CD4-positive, alpha-beta T cell (primary cell): ENCODE measurements at regions of chr7 and their contacts with region 1.

Region 1: GRCh38 chr7:17247357-17247756 is 51.1 kb upstream of the AHR start:
- DNase-seq: no peak
- ATAC-seq: no peak
- H3K4me3 ChIP-seq: no peak overlapping the region
- H3K4me3 Mint-ChIP-seq: no peak overlapping the region
- H3K27ac ChIP-seq: no peak overlapping the region
- H3K27ac Mint-ChIP-seq: no peak overlapping the region
- H3K4me1 ChIP-seq: no peaks in the 10 kb centered on the region
- H3K4me1 Mint-ChIP-seq: peaks cover 7% of the 10 kb centered on the region
- H3K27me3 ChIP-seq: no peaks in the 10 kb centered on the region
- H3K27me3 Mint-ChIP-seq: no peaks in the 10 kb centered on the region
- CTCF ChIP-seq: no peak

Region 2: GRCh38 chr7:17275749-17276671 is 28.7 kb after region 1 on chr7:
- CTCF ChIA-PET with region 1: no interaction called
- POLR2A ChIA-PET with region 1: no interaction called
- intact Hi-C with region 1: loop called in 1 of 2 experiments (anchors 5 kb)
- DNase-seq: no peak
- ATAC-seq: no peak
- H3K4me3 ChIP-seq: no peak overlapping the region
- H3K4me3 Mint-ChIP-seq: no peak overlapping the region
- H3K27ac ChIP-seq: no peak overlapping the region
- H3K27ac Mint-ChIP-seq: no peak overlapping the region
- H3K4me1 ChIP-seq: peaks cover 3% of the 10 kb centered on the region
- H3K4me1 Mint-ChIP-seq: peaks cover 12% of the 10 kb centered on the region
- H3K27me3 ChIP-seq: no peaks in the 10 kb centered on the region
- H3K27me3 Mint-ChIP-seq: no peaks in the 10 kb centered on the region
- CTCF ChIP-seq: no peak